ENCODE measurements at regions of chr2 and their contacts with region 1.

Region 1: DNA sequence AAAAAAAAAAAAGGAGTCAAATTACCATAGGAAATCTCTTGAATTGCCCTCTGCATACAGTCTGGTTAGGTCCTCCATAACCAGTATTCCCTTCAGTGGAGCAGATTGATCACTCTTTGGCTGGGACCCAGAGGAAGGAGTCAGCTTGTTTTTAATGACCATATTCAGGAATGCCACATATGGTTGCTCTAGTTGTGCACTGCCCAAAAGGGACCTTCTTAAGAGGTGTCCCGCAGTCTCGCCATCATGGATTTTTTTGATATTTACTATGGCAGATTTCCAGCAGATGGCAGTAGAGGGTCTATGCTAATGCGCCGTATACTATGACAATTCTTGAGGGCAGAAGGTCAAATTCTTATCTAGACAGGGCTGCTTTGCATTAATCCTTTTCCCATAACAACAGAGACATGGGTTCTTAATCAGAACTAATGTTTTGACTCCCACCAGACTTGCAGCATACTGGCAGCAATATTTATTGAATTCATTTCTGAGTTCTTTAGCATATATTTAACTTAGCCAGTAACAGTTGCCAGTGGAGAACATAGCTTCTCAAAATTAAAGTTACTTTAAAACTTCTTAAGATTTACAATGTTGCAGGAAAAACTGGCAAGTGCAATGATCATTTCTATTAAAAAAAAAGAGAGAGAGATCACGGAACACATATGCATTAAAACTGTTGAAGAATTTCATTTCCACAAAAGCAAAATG is 31.8 kb upstream of the INPP4A start:
- DNase-seq: peak; percentile 83
- ATAC-seq: peak; percentile 81
- H3K4me3 ChIP-seq: no peak overlapping the region
- H3K4me3 Mint-ChIP-seq: no peak overlapping the region
- H3K27ac ChIP-seq: no peak overlapping the region
- H3K27ac Mint-ChIP-seq: no peak overlapping the region
- H3K4me1 ChIP-seq: peaks cover 0 to 2% of the 10 kb centered on the region in 2 donors
- H3K4me1 Mint-ChIP-seq: peaks cover 2% of the 10 kb centered on the region
- H3K27me3 ChIP-seq: no peaks in the 10 kb centered on the region
- H3K27me3 Mint-ChIP-seq: peaks cover 4% of the 10 kb centered on the region
- CTCF ChIP-seq: peak; percentile 93

Region 2: GRCh38 chr2:98465456-98466226 is 52.7 kb after region 1 on chr2:
- CTCF ChIA-PET with region 1: interaction called, 6 read pairs
- POLR2A ChIA-PET with region 1: no interaction called
- intact Hi-C with region 1: loop called (anchors 5 kb)
- DNase-seq: peak; percentile 40
- ATAC-seq: no peak
- H3K4me3 ChIP-seq: peak overlapping the region in 1 of 5 experiments; percentile 12
- H3K4me3 Mint-ChIP-seq: peak overlapping the region; percentile 64
- H3K27ac ChIP-seq: peak overlapping the region; percentile 31 to 58
- H3K27ac Mint-ChIP-seq: peak overlapping the region; percentile 82
- H3K4me1 ChIP-seq: peaks cover 56 to 68% of the 10 kb centered on the region in 2 donors
- H3K4me1 Mint-ChIP-seq: peaks cover 63% of the 10 kb centered on the region
- H3K27me3 ChIP-seq: no peaks in the 10 kb centered on the region
- H3K27me3 Mint-ChIP-seq: no peaks in the 10 kb centered on the region
- CTCF ChIP-seq: no peak

Region 3: GRCh38 chr2:98560256-98560771 is 147.4 kb after region 1 on chr2:
- CTCF ChIA-PET with region 1: no interaction called
- POLR2A ChIA-PET with region 1: no interaction called
- intact Hi-C with region 1: loop called (anchors 5 kb)
- DNase-seq: no peak
- ATAC-seq: no peak
- H3K4me3 ChIP-seq: no peak overlapping the region
- H3K4me3 Mint-ChIP-seq: no peak overlapping the region
- H3K27ac ChIP-seq: no peak overlapping the region
- H3K27ac Mint-ChIP-seq: peak overlapping the region; percentile 15
- H3K4me1 ChIP-seq: peaks cover 8 to 29% of the 10 kb centered on the region in 2 donors
- H3K4me1 Mint-ChIP-seq: peaks cover 29% of the 10 kb centered on the region
- H3K27me3 ChIP-seq: no peaks in the 10 kb centered on the region
- H3K27me3 Mint-ChIP-seq: no peaks in the 10 kb centered on the region
- CTCF ChIP-seq: no peak

Region 4: GRCh38 chr2:98601532-98602132 is 188.7 kb after region 1 on chr2:
- CTCF ChIA-PET with region 1: interaction called, 9 read pairs
- POLR2A ChIA-PET with region 1: no interaction called
- intact Hi-C with region 1: loop called (anchors 1 kb)
- DNase-seq: peak; percentile 36
- ATAC-seq: peak; percentile 51
- H3K4me3 ChIP-seq: no peak overlapping the region
- H3K4me3 Mint-ChIP-seq: no peak overlapping the region
- H3K27ac ChIP-seq: no peak overlapping the region
- H3K27ac Mint-ChIP-seq: no peak overlapping the region
- H3K4me1 ChIP-seq: peaks cover 5% of the 10 kb centered on the region in 2 donors
- H3K4me1 Mint-ChIP-seq: peaks cover 23% of the 10 kb centered on the region
- H3K27me3 ChIP-seq: no peaks in the 10 kb centered on the region
- H3K27me3 Mint-ChIP-seq: no peaks in the 10 kb centered on the region
- CTCF ChIP-seq: peak; percentile 56

Region 5: DNA sequence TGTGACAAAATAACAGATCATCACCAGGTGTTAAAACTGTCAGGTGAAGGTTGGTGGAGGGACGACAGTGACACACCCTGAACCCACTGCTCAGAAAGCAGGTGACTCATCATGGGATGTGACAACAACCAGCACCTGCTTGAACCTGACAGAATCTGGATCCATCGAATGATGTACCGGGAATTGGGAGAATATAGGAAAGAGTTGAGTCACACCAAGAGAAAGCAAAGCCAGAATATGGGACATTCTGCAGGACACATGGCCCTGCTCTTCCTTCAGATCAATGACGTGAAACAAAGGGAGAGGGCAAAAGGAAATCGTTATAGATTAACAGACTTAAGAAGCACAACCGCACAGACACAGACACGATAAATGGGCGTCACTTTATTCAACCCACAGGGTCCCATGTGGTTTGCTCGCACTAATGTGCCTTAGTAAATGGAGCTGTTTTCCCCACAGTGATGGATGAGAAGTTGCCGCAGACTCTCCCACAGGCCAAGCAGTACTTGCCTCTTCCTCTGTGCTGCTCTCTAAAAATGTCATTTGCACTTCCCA is 423.0 kb after region 1 on chr2:
- CTCF ChIA-PET with region 1: interaction called, 13 read pairs
- POLR2A ChIA-PET with region 1: no interaction called
- intact Hi-C with region 1: no loop called
- DNase-seq: no peak
- ATAC-seq: no peak
- H3K4me3 ChIP-seq: no peak overlapping the region
- H3K4me3 Mint-ChIP-seq: no peak overlapping the region
- H3K27ac ChIP-seq: no peak overlapping the region
- H3K27ac Mint-ChIP-seq: no peak overlapping the region
- H3K4me1 ChIP-seq: peaks cover 0 to 3% of the 10 kb centered on the region in 2 donors
- H3K4me1 Mint-ChIP-seq: peaks cover 7% of the 10 kb centered on the region
- H3K27me3 ChIP-seq: no peaks in the 10 kb centered on the region
- H3K27me3 Mint-ChIP-seq: no peaks in the 10 kb centered on the region
- CTCF ChIP-seq: no peak

Region 6: GRCh38 chr2:100302585-100302892 is 1889.6 kb after region 1 on chr2:
- CTCF ChIA-PET with region 1: no interaction called
- POLR2A ChIA-PET with region 1: no interaction called
- intact Hi-C with region 1: no loop called
- DNase-seq: no peak
- ATAC-seq: no peak
- H3K4me3 ChIP-seq: no peak overlapping the region
- H3K4me3 Mint-ChIP-seq: no peak overlapping the region
- H3K27ac ChIP-seq: no peak overlapping the region
- H3K27ac Mint-ChIP-seq: no peak overlapping the region
- H3K4me1 ChIP-seq: no peaks in the 10 kb centered on the region
- H3K4me1 Mint-ChIP-seq: no peaks in the 10 kb centered on the region
- H3K27me3 ChIP-seq: peaks cover 0 to 3% (median 0%) of the 10 kb centered on the region in 4 experiments
- H3K27me3 Mint-ChIP-seq: peaks cover 37% of the 10 kb centered on the region
- CTCF ChIP-seq: no peak